Natural killer cell (primary cell): ENCODE measurements at regions of chr12 and their contacts with region 1.

Region 1: GRCh38 chr12:3727877-3728632 is 24.9 kb downstream of the CRACR2A start:
- DNase-seq: peak; percentile 56 to 80
- ATAC-seq: peak; percentile 82 to 88 (median 86)
- H3K4me3 ChIP-seq: peak overlapping the region; percentile 4
- H3K4me3 Mint-ChIP-seq: peak overlapping the region; percentile 88
- H3K27ac ChIP-seq: peak overlapping the region; percentile 89
- H3K27ac Mint-ChIP-seq: peak overlapping the region; percentile 88 to 95
- H3K4me1 ChIP-seq: peaks cover 39% of the 10 kb centered on the region
- H3K4me1 Mint-ChIP-seq: peaks cover 53 to 64% of the 10 kb centered on the region in 2 donors
- H3K27me3 ChIP-seq: no peaks in the 10 kb centered on the region
- H3K27me3 Mint-ChIP-seq: no peaks in the 10 kb centered on the region
- CTCF ChIP-seq: no peak

Region 2: GRCh38 chr12:3743803-3744202 is 15.7 kb after region 1 on chr12:
- intact Hi-C with region 1: loop called (anchors 2 kb)
- DNase-seq: no peak
- ATAC-seq: peak; percentile 35 to 52 (median 35)
- H3K4me3 ChIP-seq: no peak overlapping the region
- H3K4me3 Mint-ChIP-seq: peak overlapping the region; percentile 65
- H3K27ac ChIP-seq: peak overlapping the region; percentile 48
- H3K27ac Mint-ChIP-seq: peak overlapping the region; percentile 82 to 93
- H3K4me1 ChIP-seq: peaks cover 51% of the 10 kb centered on the region
- H3K4me1 Mint-ChIP-seq: peaks cover 49 to 60% of the 10 kb centered on the region in 2 donors
- H3K27me3 ChIP-seq: no peaks in the 10 kb centered on the region
- H3K27me3 Mint-ChIP-seq: no peaks in the 10 kb centered on the region
- CTCF ChIP-seq: no peak

Region 3: DNA sequence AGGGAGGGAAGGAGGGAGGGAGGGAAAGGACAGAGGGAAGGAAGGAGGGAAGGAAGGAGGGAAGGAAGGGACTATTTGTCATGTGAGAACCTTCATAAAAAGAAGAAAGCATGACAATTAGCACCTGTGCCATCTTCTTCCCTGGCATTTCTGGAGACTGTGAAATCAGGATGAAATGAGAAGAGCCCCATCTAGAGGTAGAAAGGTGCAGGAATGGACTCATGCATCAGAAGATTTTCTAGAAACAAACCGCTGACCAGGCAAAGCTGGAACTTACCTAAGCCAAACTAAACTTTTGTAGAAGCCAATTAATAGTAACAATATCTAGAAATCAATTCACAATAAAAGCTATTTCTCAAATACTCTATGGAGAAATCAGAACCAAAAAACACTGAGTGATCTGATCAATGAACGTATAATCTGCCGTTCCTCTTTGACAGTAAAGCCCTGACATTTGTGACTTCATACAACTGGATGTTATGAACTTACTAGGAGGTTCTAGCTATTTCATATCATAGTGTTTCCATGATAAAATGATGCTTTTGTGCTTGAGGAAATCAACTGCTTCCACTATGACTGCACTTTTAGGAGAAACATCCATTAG is 49.3 kb after region 1 on chr12:
- intact Hi-C with region 1: no loop called
- DNase-seq: peak in 1 of 2 donors; percentile 68
- ATAC-seq: peak in 2 of 3 donors; percentile 55 to 66
- H3K4me3 ChIP-seq: no peak overlapping the region
- H3K4me3 Mint-ChIP-seq: no peak overlapping the region
- H3K27ac ChIP-seq: no peak overlapping the region
- H3K27ac Mint-ChIP-seq: no peak overlapping the region
- H3K4me1 ChIP-seq: no peaks in the 10 kb centered on the region
- H3K4me1 Mint-ChIP-seq: no peaks in the 10 kb centered on the region
- H3K27me3 ChIP-seq: no peaks in the 10 kb centered on the region
- H3K27me3 Mint-ChIP-seq: peaks cover 0 to 2% of the 10 kb centered on the region in 2 donors
- CTCF ChIP-seq: peak; percentile 70

Region 4: DNA sequence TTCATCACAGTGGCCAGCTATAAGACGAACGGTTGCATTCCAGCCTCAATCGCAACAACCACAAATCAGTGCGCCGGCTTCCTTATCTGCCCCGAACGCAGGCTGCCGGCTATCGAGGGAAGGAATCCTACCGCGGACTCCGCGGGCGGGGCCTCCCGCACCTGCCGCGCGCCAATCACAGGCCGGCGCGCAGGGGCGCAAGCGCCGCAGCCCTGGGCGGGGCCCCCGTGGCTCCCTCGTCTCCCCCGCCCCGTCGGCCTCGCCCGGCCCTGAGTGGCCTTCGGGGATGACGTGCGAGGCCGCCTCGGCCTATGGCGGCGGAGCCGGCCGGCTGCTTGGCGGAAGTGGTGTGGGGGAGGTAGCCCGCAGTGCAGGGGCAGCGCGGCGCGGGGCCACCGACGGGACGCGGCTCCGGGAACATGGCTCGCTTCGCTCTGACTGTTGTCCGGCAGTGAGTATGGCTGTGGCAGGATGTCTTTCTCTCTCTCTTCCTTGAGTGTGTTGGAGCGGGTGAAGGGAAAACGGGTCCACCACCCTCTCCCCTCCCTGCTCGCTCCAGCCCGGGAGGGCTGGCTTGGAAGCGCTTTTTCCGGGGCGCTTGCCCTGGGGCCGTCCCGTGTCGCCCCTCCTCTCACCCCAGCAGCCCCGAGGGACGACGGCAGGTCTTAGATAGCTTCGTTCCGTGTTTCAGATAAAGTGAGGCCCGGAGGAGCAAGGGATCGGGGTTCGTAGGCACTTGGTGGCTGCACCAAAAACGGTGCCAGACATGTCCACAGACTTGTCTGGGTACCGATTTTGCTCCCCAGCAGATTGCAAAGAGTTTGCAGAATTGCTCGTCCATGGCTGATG is 593.0 kb after region 1 on chr12 and contains the start of gene TIGAR:
- intact Hi-C with region 1: loop called (anchors 1 kb)
- DNase-seq: peak; percentile 93 to 96
- ATAC-seq: peak; percentile 96 to 100 (median 97)
- H3K4me3 ChIP-seq: peak within 1 kb of the TSS; percentile 98
- H3K4me3 Mint-ChIP-seq: peak within 1 kb of the TSS; percentile 95
- H3K27ac ChIP-seq: peak within 1 kb of the TSS; percentile 86
- H3K27ac Mint-ChIP-seq: peak within 1 kb of the TSS; percentile 91 to 95
- H3K4me1 ChIP-seq: peaks cover 22% of the 10 kb centered on the region
- H3K4me1 Mint-ChIP-seq: peaks cover 30 to 33% of the 10 kb centered on the region in 2 donors
- H3K27me3 ChIP-seq: no peaks in the 10 kb centered on the region
- H3K27me3 Mint-ChIP-seq: no peaks in the 10 kb centered on the region
- CTCF ChIP-seq: no peak
- total RNA-seq, gene TIGAR: 6.1 to 7.4 (median 7.3) TPM